ENCODE measurements at regions of chr4 and their contacts with region 1.

Region 1: DNA sequence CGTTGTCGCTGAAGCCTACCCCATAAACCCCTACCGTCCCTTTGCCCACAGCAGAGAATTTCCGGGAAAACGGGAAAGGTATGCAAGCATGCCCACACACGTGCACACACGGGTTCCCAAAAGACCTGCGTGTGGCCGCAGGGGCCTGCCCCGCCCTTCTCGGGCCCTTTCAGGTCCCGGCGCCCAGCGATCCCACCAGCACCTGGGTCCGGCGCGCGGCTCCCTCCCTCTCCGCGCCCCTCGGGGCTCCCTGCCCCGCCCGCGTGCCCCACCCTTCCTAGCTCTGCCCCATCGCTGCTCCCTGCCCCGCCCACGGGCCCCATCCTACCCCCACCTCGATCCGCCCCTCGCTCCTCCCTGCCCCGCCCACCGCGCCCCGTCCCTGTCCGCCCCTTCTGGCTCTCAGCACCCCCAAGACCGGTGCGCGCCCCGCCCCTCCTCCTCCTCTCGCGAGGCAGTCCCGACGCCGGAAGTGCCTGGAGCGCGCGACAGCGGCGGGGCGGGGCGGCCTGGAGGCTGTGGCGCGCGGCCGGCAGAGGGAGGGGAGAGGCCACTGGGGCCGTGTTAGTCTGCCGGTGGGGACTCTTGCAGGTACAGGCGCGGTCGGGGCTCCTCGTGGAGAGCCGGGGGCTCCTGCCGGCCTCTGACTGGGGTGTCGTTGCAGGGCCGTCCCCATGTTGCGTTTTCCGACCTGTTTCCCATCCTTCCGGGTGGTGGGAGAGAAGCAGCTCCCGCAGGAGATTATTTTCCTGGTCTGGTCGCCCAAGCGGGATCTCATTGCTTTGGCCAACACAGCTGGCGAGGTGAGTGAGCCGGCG is at the start of gene ANAPC4:
- DNase-seq: peak; percentile 98
- H3K4me3 Mint-ChIP-seq: no peak within 1 kb of the TSS
- H3K27ac Mint-ChIP-seq: peak within 1 kb of the TSS; percentile 85
- H3K4me1 Mint-ChIP-seq: peaks cover 11% of the 10 kb centered on the region
- H3K27me3 Mint-ChIP-seq: no peaks in the 10 kb centered on the region
- total RNA-seq, gene ANAPC4: 41.0 to 41.2 TPM

Region 2: DNA sequence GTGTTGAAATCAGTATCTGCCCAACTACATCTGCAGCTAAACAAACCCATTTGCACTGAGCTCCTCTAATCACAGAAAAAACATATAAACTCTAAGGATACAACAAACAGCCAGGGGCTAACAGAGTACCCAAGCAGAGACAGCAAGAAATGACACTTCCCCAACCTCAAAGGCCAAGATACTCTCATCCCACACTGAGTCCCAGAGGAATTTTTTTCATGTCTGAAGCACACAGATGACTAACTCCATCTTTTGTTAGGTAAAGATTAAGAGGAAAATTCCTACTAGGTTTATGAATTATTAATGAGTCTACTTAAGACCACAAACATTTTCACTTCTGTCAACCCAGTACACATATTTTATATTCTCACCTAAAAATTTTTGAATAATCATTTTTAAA is 248.3 kb before region 1 on chr4:
- CTCF ChIA-PET with region 1: no interaction called
- POLR2A ChIA-PET with region 1: no interaction called
- DNase-seq: no peak
- H3K4me3 Mint-ChIP-seq: no peak overlapping the region
- H3K27ac Mint-ChIP-seq: no peak overlapping the region
- H3K4me1 Mint-ChIP-seq: peaks cover 8% of the 10 kb centered on the region
- H3K27me3 Mint-ChIP-seq: no peaks in the 10 kb centered on the region

Region 3: GRCh38 chr4:25159884-25160713 is 216.9 kb before region 1 on chr4 and contains the start of gene SEPSECS:
- CTCF ChIA-PET with region 1: interaction called, 7 read pairs
- POLR2A ChIA-PET with region 1: interaction called, 29 read pairs
- DNase-seq: peak; percentile 95
- H3K4me3 Mint-ChIP-seq: peak within 1 kb of the TSS; percentile 93
- H3K27ac Mint-ChIP-seq: peak within 1 kb of the TSS; percentile 93
- H3K4me1 Mint-ChIP-seq: peaks cover 45% of the 10 kb centered on the region
- H3K27me3 Mint-ChIP-seq: no peaks in the 10 kb centered on the region
- total RNA-seq, gene SEPSECS: 15.1 to 15.2 TPM

Region 4: DNA sequence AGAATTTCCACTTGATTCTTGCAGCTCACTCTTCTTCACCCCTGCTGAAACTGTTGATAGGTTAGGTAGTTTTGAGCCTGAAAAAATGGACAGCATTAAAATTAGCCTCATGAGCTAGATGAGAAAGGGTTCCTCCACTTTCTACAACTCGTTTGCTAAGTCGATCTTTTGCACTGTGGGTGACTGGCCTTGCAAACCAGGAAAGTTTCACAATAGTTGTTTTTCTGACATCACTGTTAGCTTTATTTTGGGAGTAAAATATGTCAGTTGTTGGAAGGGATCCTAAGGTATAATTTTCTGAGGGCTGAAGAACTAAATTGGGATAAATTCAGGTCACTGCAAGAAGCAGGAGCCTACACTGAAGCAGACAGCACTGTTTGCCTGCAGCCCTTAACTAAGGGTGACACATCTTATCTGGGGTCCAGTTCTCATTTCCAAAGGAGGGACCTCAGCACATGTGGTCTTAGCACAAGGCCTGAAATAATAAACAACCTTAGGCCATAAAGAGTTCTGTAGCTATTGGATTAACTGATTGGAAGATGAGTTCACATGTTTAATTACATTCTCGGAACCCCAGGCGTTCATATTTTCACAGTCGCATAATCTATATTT is 29.2 kb after region 1 on chr4:
- CTCF ChIA-PET with region 1: no interaction called
- POLR2A ChIA-PET with region 1: no interaction called
- DNase-seq: no peak
- H3K4me3 Mint-ChIP-seq: no peak overlapping the region
- H3K27ac Mint-ChIP-seq: no peak overlapping the region
- H3K4me1 Mint-ChIP-seq: no peaks in the 10 kb centered on the region
- H3K27me3 Mint-ChIP-seq: no peaks in the 10 kb centered on the region

Measured in activated CD4-positive, alpha-beta memory T cell treated with anti-CD3 and anti-CD28 coated beads, Interleukin-2, amount 10 ng/mL, durations not matched to agents 7 days and 5 days (primary cell).